B cell (primary cell): ENCODE measurements at regions of chr12 and their contacts with region 1.

Region 1: GRCh38 chr12:4215229-4216186 is 58.1 kb upstream of the CCND2 start:
- DNase-seq: peak; percentile 91
- ATAC-seq: peak; percentile 90
- H3K4me3 ChIP-seq: peak overlapping the region; percentile 28 to 53 (median 34)
- H3K4me3 Mint-ChIP-seq: peak overlapping the region; percentile 87
- H3K27ac ChIP-seq: peak overlapping the region; percentile 89 to 94
- H3K27ac Mint-ChIP-seq: peak overlapping the region; percentile 94
- H3K4me1 ChIP-seq: peaks cover 32 to 41% of the 10 kb centered on the region in 2 donors
- H3K4me1 Mint-ChIP-seq: peaks cover 41% of the 10 kb centered on the region
- H3K27me3 ChIP-seq: no peaks in the 10 kb centered on the region
- H3K27me3 Mint-ChIP-seq: no peaks in the 10 kb centered on the region
- CTCF ChIP-seq: no peak

Region 2: DNA sequence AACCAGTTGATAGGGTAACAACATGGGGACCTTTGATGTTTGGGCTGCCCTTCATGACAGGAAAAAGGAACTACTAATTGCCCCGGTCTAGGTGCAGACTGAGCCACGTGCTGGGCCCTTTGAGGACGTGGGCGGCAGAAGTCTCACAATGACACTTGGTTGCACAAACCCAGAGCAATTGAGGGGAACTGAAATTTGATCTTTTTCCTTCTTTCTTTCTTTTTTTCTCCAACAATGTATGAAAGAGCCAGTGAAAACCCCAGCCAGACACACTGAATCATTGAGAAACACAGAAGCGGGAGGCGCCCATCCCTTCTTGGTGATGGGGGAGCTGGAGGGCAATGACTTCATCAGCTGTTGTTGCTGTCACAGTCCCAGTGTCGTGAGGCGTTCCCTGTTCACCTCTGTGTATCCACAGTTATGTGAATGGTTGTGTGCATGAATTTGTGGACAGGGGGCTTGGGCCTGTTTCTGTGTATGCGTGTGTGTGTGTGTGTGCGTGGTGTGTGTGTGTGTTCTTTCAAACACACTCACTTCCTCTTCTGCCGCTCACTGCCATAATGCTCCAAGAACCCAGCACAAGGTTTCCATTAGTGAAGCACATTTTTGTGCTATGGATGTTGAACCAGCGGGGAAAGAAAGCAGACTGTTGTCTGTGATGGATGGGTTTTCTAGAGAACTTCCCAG is 79.4 kb before region 1 on chr12:
- CTCF ChIA-PET with region 1: no interaction called
- POLR2A ChIA-PET with region 1: no interaction called
- intact Hi-C with region 1: loop called (anchors 1 kb)
- DNase-seq: peak; percentile 82
- ATAC-seq: peak; percentile 85
- H3K4me3 ChIP-seq: no peak overlapping the region
- H3K4me3 Mint-ChIP-seq: peak overlapping the region; percentile 11
- H3K27ac ChIP-seq: peak overlapping the region; percentile 5 to 39
- H3K27ac Mint-ChIP-seq: peak overlapping the region; percentile 61
- H3K4me1 ChIP-seq: peaks cover 41 to 50% of the 10 kb centered on the region in 2 donors
- H3K4me1 Mint-ChIP-seq: peaks cover 50% of the 10 kb centered on the region
- H3K27me3 ChIP-seq: no peaks in the 10 kb centered on the region
- H3K27me3 Mint-ChIP-seq: no peaks in the 10 kb centered on the region
- CTCF ChIP-seq: no peak

Region 3: GRCh38 chr12:4307593-4308333 is 92.3 kb after region 1 on chr12:
- CTCF ChIA-PET with region 1: no interaction called
- POLR2A ChIA-PET with region 1: no interaction called
- intact Hi-C with region 1: no loop called
- DNase-seq: peak; percentile 29
- ATAC-seq: peak; percentile 41
- H3K4me3 ChIP-seq: no peak overlapping the region
- H3K4me3 Mint-ChIP-seq: no peak overlapping the region
- H3K27ac ChIP-seq: no peak overlapping the region
- H3K27ac Mint-ChIP-seq: no peak overlapping the region
- H3K4me1 ChIP-seq: no peaks in the 10 kb centered on the region
- H3K4me1 Mint-ChIP-seq: no peaks in the 10 kb centered on the region
- H3K27me3 ChIP-seq: no peaks in the 10 kb centered on the region
- H3K27me3 Mint-ChIP-seq: no peaks in the 10 kb centered on the region
- CTCF ChIP-seq: no peak